ENCODE measurements at regions of chr13 and their contacts with region 1.

Region 1: GRCh38 chr13:25018729-25019115 is 77.2 kb upstream of the PABPC3 start:
- DNase-seq: no peak
- H3K4me3 ChIP-seq: peak overlapping the region; percentile 52
- H3K27ac ChIP-seq: no peak overlapping the region
- H3K4me1 ChIP-seq: no peaks in the 10 kb centered on the region
- H3K27me3 ChIP-seq: no peaks in the 10 kb centered on the region
- CTCF ChIP-seq: no peak

Region 2: DNA sequence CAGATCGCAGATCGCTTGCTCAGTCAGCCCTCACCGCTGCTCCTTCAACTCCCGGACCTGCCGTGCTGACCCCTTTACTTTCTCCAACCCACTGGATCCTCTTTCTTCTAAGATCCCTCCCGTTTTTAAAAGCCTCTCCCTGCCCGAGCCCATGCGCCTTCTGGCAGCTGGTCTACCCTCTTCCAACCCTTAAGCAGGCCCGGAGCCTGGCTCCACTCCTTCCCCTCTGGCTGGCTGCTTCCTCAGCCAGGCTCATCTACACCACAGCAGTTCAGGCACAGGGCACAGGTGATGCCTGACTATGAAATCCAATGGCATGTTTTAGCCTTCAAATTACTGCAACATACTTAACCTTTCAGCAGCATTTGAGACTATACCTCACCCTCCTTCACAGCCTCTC is 13.4 kb after region 1 on chr13:
- CTCF ChIA-PET with region 1: no interaction called
- POLR2A ChIA-PET with region 1: no interaction called
- intact Hi-C with region 1: loop called (anchors 2 kb)
- DNase-seq: no peak
- H3K4me3 ChIP-seq: no peak overlapping the region
- H3K27ac ChIP-seq: no peak overlapping the region
- H3K4me1 ChIP-seq: no peaks in the 10 kb centered on the region
- H3K27me3 ChIP-seq: no peaks in the 10 kb centered on the region
- CTCF ChIP-seq: no peak

Region 3: DNA sequence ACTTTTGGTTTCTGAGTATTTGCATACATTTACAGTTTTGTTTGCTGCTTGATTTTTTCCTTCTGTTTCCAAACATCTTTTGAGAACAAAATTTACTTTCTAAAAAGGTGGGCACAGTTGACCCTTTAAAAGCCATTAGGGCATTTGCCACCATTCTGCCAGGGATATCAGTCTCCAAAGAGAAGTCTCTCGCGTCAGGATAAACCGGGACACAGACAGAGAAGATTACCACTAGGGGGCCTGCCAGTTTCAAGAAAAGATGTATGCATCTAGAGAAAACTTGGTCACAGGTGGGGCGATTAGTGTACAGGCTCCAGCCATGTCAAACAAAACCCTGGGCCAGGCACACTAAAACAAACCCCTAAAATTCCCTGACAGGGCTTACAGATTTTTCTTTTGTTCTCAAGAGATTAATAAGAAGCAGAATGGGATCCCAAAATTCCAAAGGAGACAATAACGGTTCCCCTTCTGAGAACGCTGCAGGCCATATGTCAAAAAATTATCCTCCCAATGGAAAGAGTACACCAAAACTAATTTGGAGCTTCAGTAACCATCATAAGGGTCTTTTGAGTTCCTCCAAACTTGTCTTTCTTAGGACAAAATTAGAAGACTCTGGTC is 66.5 kb after region 1 on chr13:
- CTCF ChIA-PET with region 1: no interaction called
- POLR2A ChIA-PET with region 1: no interaction called
- intact Hi-C with region 1: no loop called
- DNase-seq: peak; percentile 72
- H3K4me3 ChIP-seq: no peak overlapping the region
- H3K27ac ChIP-seq: no peak overlapping the region
- H3K4me1 ChIP-seq: no peaks in the 10 kb centered on the region
- H3K27me3 ChIP-seq: no peaks in the 10 kb centered on the region
- CTCF ChIP-seq: peak; percentile 88